ENCODE measurements at regions of chr20 and their contacts with region 1.

Region 1: GRCh38 chr20:17898548-17898994 is 70.0 kb downstream of the SNX5 start:
- DNase-seq: no peak
- H3K4me3 ChIP-seq: no peak overlapping the region
- CTCF ChIP-seq: peak; percentile 88

Region 2: GRCh38 chr20:17654649-17655285 is 243.8 kb before region 1 on chr20:
- CTCF ChIA-PET with region 1: interaction called, 124 read pairs
- POLR2A ChIA-PET with region 1: no interaction called
- DNase-seq: no peak
- H3K4me3 ChIP-seq: no peak overlapping the region
- CTCF ChIP-seq: peak; percentile 51

Region 3: DNA sequence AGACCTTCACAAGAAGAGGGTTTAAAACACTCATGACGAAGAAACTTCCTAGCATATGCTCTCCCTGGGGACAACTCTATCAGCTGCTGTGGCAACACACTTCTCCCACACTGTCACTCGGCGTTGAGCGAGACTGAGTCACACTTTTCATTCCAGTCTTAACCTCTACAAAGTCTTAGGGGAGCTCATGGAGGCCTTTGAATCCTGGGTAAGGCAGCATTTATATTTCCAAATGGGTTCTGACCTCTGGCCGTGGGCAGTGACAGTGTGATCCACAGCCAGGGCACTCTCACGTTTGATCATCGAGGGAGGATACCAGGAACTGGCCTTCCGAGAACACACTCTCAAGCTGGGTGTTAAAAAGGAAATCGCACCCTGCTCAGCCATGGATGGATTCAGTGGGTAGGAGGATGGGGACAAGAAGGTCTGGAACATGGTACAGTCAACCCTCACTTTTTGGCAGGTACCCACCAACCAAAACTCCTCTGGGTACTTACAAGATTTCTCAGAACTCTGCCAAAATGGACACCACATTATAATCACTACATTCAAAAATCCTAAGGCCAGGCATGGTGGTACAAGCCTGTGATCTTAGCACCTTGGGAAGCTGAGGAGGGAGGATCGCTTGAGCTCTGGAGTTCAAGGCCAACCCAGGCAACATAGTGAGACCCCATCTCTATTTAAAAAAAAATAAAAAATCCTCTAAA is 236.1 kb before region 1 on chr20:
- CTCF ChIA-PET with region 1: interaction called, 124 read pairs
- POLR2A ChIA-PET with region 1: no interaction called
- DNase-seq: no peak
- H3K4me3 ChIP-seq: no peak overlapping the region
- CTCF ChIP-seq: no peak

Region 4: DNA sequence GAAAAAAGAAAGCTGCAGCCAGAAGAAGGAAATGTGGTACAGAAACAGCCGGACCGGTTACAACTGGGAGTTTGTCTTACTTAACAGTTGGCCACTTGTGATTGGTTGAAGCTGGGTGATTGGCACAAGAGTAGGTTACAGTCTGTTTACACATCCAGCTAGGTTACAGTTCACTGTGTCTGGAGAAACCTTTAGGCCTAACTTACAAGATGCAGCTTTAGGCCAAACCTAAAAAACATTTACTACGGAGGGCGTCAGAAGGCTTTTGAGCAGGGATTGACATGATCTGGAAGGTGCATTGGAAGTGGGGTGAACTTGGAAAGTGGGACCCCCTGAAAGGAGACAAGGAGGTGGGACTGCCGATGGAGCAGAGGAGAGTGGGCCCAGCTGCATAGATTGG is 76.5 kb before region 1 on chr20:
- CTCF ChIA-PET with region 1: no interaction called
- POLR2A ChIA-PET with region 1: no interaction called
- DNase-seq: no peak
- H3K4me3 ChIP-seq: no peak overlapping the region
- CTCF ChIP-seq: no peak

Region 5: GRCh38 chr20:17910828-17911294 is 12.3 kb after region 1 on chr20:
- CTCF ChIA-PET with region 1: interaction called, 36 read pairs
- POLR2A ChIA-PET with region 1: no interaction called
- DNase-seq: peak; percentile 63
- H3K4me3 ChIP-seq: no peak overlapping the region
- CTCF ChIP-seq: peak; percentile 7

Measured in AG04449 (cell line).